Caco-2 (cell line): ENCODE measurements at regions of chr3 and their contacts with region 1.

Region 1: GRCh38 chr3:113838631-113839209 is at the start of gene GRAMD1C:
- DNase-seq: peak; percentile 86 to 88
- H3K4me3 ChIP-seq: peak within 1 kb of the TSS; percentile 35
- H3K4me3 Mint-ChIP-seq: peak within 1 kb of the TSS; percentile 71
- H3K27ac Mint-ChIP-seq: peak within 1 kb of the TSS; percentile 48
- H3K4me1 ChIP-seq: 0 out of 2 replicates have a peak, but pooled peaks cover 9% of the 10 kb centered on the region
- H3K4me1 Mint-ChIP-seq: peaks cover 7% of the 10 kb centered on the region
- H3K27me3 ChIP-seq: no peaks in the 10 kb centered on the region
- H3K27me3 Mint-ChIP-seq: no peaks in the 10 kb centered on the region
- CTCF ChIP-seq: peak; percentile 86 to 92
- total RNA-seq, gene GRAMD1C: 3.9 and 4.2 TPM in 2 replicates

Region 2: GRCh38 chr3:113736548-113737089 is 102.1 kb before region 1 on chr3:
- CTCF ChIA-PET with region 1: interaction called, 9 read pairs
- POLR2A ChIA-PET with region 1: no interaction called
- intact Hi-C with region 1: loop called (anchors 1 kb)
- DNase-seq: peak in 1 of 2 experiments; percentile 60
- H3K4me3 ChIP-seq: no peak overlapping the region
- H3K4me3 Mint-ChIP-seq: no peak overlapping the region
- H3K27ac Mint-ChIP-seq: no peak overlapping the region
- H3K4me1 ChIP-seq: peaks cover 6% of the 10 kb centered on the region; the same call in 1 of the 2 replicates
- H3K4me1 Mint-ChIP-seq: peaks cover 7% of the 10 kb centered on the region
- H3K27me3 ChIP-seq: no peaks in the 10 kb centered on the region
- H3K27me3 Mint-ChIP-seq: no peaks in the 10 kb centered on the region
- CTCF ChIP-seq: peak; percentile 45 to 52

Region 3: GRCh38 chr3:113890256-113890900 is 51.7 kb after region 1 on chr3:
- CTCF ChIA-PET with region 1: interaction called, 6 read pairs
- POLR2A ChIA-PET with region 1: no interaction called
- intact Hi-C with region 1: loop called (anchors 2 kb)
- DNase-seq: peak; percentile 27 to 43
- H3K4me3 ChIP-seq: no peak overlapping the region
- H3K4me3 Mint-ChIP-seq: no peak overlapping the region
- H3K27ac Mint-ChIP-seq: no peak overlapping the region
- H3K4me1 ChIP-seq: no peaks in the 10 kb centered on the region
- H3K4me1 Mint-ChIP-seq: no peaks in the 10 kb centered on the region
- H3K27me3 ChIP-seq: no peaks in the 10 kb centered on the region
- H3K27me3 Mint-ChIP-seq: no peaks in the 10 kb centered on the region
- CTCF ChIP-seq: no peak